Activated CD8-positive, alpha-beta T cell treated with anti-CD3 and anti-CD28 coated beads for 36 hours (primary cell): ENCODE measurements at regions of chr4 and their contacts with region 1.

Region 1: DNA sequence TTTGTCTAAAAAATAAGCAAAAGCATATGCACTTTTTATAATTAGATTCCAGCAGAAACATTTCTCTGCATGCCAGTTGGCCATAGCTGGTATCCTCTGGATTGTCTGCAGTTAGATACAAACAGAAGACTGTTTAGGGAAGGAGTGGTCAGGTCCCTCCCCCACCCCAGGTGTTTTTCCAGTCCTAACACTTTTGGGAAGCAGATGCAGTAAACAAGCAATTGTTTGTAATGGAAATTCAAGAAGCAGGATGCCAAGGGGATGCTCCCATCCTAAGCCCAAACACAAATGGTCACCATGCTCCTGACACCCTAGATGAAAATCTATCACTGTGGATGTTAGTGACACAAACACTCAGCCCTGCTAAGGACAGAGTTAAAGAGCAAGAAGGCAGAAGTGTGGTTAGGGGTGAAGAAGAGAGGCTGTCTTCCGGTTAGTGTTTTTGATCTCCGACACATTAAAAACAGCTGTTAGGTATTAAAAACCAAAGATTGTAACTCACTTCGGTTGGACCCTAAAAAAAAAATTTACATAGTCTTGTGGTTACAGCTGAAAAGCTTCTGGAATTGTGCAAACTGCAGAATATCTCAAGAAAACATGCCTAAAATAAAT is 7.9 kb downstream of the LEF1 start:
- DNase-seq: peak; percentile 19
- ATAC-seq: peak; percentile 50
- H3K4me3 Mint-ChIP-seq: peak overlapping the region; percentile 87
- H3K27ac Mint-ChIP-seq: peak overlapping the region; percentile 77
- H3K4me1 Mint-ChIP-seq: peaks cover 55% of the 10 kb centered on the region
- H3K27me3 Mint-ChIP-seq: no peaks in the 10 kb centered on the region
- CTCF ChIP-seq: no peak

Region 2: GRCh38 chr4:108141213-108141950 is 19.5 kb before region 1 on chr4:
- CTCF ChIA-PET with region 1: interaction called, 5 read pairs
- POLR2A ChIA-PET with region 1: interaction called, 10 read pairs
- intact Hi-C with region 1: no loop called
- DNase-seq: peak; percentile 69
- ATAC-seq: peak; percentile 37
- H3K4me3 Mint-ChIP-seq: peak overlapping the region; percentile 72
- H3K27ac Mint-ChIP-seq: peak overlapping the region; percentile 96
- H3K4me1 Mint-ChIP-seq: peaks cover 79% of the 10 kb centered on the region
- H3K27me3 Mint-ChIP-seq: no peaks in the 10 kb centered on the region
- CTCF ChIP-seq: no peak